GM12878 (cell line): ENCODE measurements at regions of chr6 and their contacts with region 1.

Region 1: GRCh38 chr6:141562851-141563763 is 569.6 kb upstream of the GJE1 start:
- DNase-seq: peak; percentile 53
- ATAC-seq: peak; percentile 96
- H3K4me3 ChIP-seq: peak overlapping the region; percentile 30; the same call in 1 of the 2 replicates
- H3K27ac ChIP-seq: no peak overlapping the region
- H3K4me1 ChIP-seq: peaks cover 4% of the 10 kb centered on the region; the same call in 1 of the 2 replicates
- H3K27me3 ChIP-seq: no peaks in the 10 kb centered on the region
- CTCF ChIP-seq: peak; percentile 75 to 84 (median 83)
- EP300 ChIP-seq: no peak; a peak in 1 of 4 replicates
- POLR2A ChIP-seq: no peak
- RAD21 ChIP-seq: peak; percentile 98

Region 2: DNA sequence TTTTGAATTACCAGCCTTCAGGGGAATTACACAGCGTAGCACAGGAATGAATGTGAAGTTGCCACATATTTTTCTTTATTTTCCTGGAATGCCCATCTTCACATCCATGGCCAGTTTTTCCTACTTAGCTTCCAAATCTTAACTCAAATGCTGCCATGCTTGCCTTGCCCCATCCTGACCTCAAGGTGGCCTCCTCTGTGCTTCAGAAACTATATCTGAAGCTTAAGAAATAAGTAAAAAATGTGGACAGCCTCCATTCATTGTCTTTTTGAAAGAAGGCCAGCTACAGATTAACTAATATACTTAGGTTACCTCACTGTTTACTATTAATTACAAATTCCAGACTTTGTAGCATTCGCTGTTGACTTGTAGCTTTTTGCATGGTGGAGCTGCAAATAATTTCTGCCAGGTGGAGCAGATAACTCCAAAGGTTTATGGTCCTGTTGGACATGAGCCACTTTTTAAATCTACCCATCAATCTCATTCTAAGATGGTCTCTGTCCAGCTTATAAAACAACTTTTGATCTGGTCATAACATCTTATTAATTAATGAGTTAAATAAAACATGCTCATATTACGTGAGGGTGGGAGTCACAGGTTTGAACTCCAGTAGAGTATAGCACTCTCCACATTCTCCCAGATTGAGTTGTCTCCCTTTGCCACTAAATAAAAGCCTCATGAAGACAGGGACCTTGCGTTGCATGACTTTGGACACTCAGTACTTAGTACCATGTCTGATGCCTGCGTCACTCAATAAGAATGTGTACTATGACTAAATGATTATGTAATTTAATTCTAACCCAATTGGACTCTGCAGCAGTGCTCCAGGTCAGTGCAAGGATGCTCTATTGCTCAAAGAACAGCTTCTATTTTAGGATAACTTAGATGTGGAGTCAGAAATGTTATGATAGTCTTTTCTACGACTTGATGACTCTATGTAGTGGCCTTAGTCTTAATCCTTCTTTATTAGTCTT is 1510.1 kb before region 1 on chr6:
- CTCF ChIA-PET with region 1: interaction called, 17 read pairs
- POLR2A ChIA-PET with region 1: no interaction called
- RAD21 ChIA-PET with region 1: interaction called, 3 read pairs
- SMC1A ChIA-PET with region 1: interaction called, 3 read pairs
- in situ Hi-C with region 1: no loop called
- intact Hi-C with region 1: loop called (anchors 10 kb)
- DNase-seq: no peak
- ATAC-seq: no peak
- H3K4me3 ChIP-seq: no peak overlapping the region
- H3K27ac ChIP-seq: no peak overlapping the region
- H3K4me1 ChIP-seq: no peaks in the 10 kb centered on the region
- H3K27me3 ChIP-seq: no peaks in the 10 kb centered on the region
- CTCF ChIP-seq: peak; percentile 27 to 40 (median 30); a peak in 4 of 6 replicates
- EP300 ChIP-seq: no peak
- POLR2A ChIP-seq: no peak
- RAD21 ChIP-seq: peak; percentile 69

Region 3: DNA sequence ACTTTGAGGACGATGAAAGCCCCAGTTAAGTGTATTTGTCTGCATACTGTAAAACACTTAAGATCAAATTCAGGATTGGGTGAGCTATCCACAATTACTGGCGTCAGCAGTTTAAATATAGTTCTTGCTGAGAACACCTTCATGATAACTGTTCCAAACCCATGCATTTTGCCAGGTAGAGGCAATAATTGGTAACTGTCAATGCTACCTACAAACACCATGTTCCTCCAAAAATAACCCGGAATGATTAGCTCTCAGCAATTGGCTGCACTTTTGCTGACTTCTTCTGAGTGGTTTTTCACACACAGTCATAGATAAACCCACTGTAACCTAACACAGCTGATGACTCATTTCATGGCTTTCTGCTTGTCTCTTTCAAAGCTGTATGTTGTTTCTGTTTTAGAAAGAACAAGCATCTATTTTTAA is 789.0 kb before region 1 on chr6:
- CTCF ChIA-PET with region 1: no interaction called
- POLR2A ChIA-PET with region 1: interaction called, 5 read pairs
- RAD21 ChIA-PET with region 1: interaction called, 3 read pairs
- SMC1A ChIA-PET with region 1: no interaction called
- in situ Hi-C with region 1: no loop called
- intact Hi-C with region 1: loop called (anchors 10 kb)
- DNase-seq: peak; percentile 30
- ATAC-seq: peak; percentile 100
- H3K4me3 ChIP-seq: no peak overlapping the region
- H3K27ac ChIP-seq: no peak overlapping the region
- H3K4me1 ChIP-seq: peaks cover 5% of the 10 kb centered on the region; the same call in 1 of the 2 replicates
- H3K27me3 ChIP-seq: no peaks in the 10 kb centered on the region
- CTCF ChIP-seq: no peak
- EP300 ChIP-seq: peak; percentile 72 to 75; a peak in 3 of 4 replicates
- POLR2A ChIP-seq: no peak
- RAD21 ChIP-seq: 0 out of 2 replicates have a peak, but pooled peaks have one; percentile 8

Region 4: GRCh38 chr6:141153563-141153962 is 409.5 kb before region 1 on chr6:
- CTCF ChIA-PET with region 1: no interaction called
- POLR2A ChIA-PET with region 1: no interaction called
- RAD21 ChIA-PET with region 1: no interaction called
- SMC1A ChIA-PET with region 1: no interaction called
- in situ Hi-C with region 1: no loop called
- intact Hi-C with region 1: loop called (anchors 10 kb)
- DNase-seq: peak; percentile 15
- ATAC-seq: peak; percentile 75
- H3K4me3 ChIP-seq: no peak overlapping the region
- H3K27ac ChIP-seq: no peak overlapping the region; the same call in 1 of the 2 replicates
- H3K4me1 ChIP-seq: no peaks in the 10 kb centered on the region
- H3K27me3 ChIP-seq: no peaks in the 10 kb centered on the region
- CTCF ChIP-seq: no peak
- EP300 ChIP-seq: peak in 1 of 2 experiments; percentile 12; a peak in 1 of 4 replicates
- POLR2A ChIP-seq: no peak
- RAD21 ChIP-seq: no peak

Region 5: DNA sequence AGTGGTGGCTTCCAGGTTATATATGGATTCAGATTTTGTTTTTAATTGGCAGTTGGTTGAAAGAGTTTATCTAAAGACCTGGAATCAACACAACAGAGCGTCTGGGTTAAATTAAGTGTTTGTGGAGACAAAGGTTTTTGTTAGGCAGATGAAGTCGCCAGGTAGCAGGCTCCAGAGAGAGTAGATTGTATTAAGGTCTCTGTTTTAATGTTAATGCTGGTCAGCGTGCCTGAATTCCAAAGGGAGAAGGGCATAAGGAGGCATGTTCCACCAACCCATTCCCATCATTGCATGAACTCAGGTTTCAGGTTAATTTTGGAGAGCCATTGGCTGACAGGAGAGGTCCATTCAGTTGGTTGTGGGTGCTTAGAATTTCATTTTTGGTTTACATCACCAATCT is 174.4 kb before region 1 on chr6:
- CTCF ChIA-PET with region 1: interaction called, 4 read pairs
- POLR2A ChIA-PET with region 1: no interaction called
- RAD21 ChIA-PET with region 1: no interaction called
- SMC1A ChIA-PET with region 1: interaction called, 3 read pairs
- in situ Hi-C with region 1: no loop called
- intact Hi-C with region 1: loop called (anchors 5 kb)
- DNase-seq: no peak
- ATAC-seq: no peak
- H3K4me3 ChIP-seq: no peak overlapping the region
- H3K27ac ChIP-seq: no peak overlapping the region
- H3K4me1 ChIP-seq: no peaks in the 10 kb centered on the region
- H3K27me3 ChIP-seq: no peaks in the 10 kb centered on the region
- CTCF ChIP-seq: no peak
- EP300 ChIP-seq: no peak
- POLR2A ChIP-seq: no peak
- RAD21 ChIP-seq: no peak

Region 6: DNA sequence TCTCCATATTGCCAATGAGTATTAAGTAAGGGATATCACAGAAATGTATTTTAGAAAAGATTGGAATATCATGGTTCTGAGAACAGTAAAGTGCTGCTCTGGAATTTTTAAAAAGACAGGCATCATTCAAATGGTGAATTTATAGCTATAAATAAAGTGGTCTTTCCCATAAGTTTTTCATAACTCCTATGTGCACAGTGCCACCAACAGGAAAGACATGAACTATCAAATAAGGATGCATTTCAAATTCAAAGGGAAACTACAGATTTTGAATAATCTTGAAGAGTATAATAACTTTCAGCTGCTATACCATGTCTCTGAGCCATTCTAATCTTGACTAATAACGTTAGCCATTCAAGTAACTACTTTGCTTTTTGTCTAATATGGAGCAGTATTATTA is 112.8 kb after region 1 on chr6:
- CTCF ChIA-PET with region 1: no interaction called
- POLR2A ChIA-PET with region 1: no interaction called
- RAD21 ChIA-PET with region 1: no interaction called
- SMC1A ChIA-PET with region 1: no interaction called
- in situ Hi-C with region 1: no loop called
- intact Hi-C with region 1: no loop called
- DNase-seq: no peak
- ATAC-seq: no peak
- H3K4me3 ChIP-seq: no peak overlapping the region
- H3K27ac ChIP-seq: no peak overlapping the region
- H3K4me1 ChIP-seq: no peaks in the 10 kb centered on the region
- H3K27me3 ChIP-seq: no peaks in the 10 kb centered on the region
- CTCF ChIP-seq: no peak; a peak in 1 of 6 replicates
- EP300 ChIP-seq: no peak
- POLR2A ChIP-seq: no peak
- RAD21 ChIP-seq: 0 out of 2 replicates have a peak, but pooled peaks have one; percentile 9